ENCODE measurements at regions of chr11 and their contacts with region 1.

Region 1: GRCh38 chr11:65418711-65419459 is 3.7 kb upstream of the NEAT1 start:
- DNase-seq: peak; percentile 94
- ATAC-seq: peak; percentile 52
- H3K4me3 ChIP-seq: peak overlapping the region; percentile 43 to 86 (median 56)
- H3K4me3 Mint-ChIP-seq: peak overlapping the region; percentile 96
- H3K27ac ChIP-seq: peak overlapping the region; percentile 91 to 97
- H3K27ac Mint-ChIP-seq: peak overlapping the region; percentile 100
- H3K4me1 ChIP-seq: peaks cover 68 to 84% of the 10 kb centered on the region in 2 donors
- H3K4me1 Mint-ChIP-seq: peaks cover 72% of the 10 kb centered on the region
- H3K27me3 ChIP-seq: no peaks in the 10 kb centered on the region
- H3K27me3 Mint-ChIP-seq: no peaks in the 10 kb centered on the region
- CTCF ChIP-seq: no peak

Region 2: DNA sequence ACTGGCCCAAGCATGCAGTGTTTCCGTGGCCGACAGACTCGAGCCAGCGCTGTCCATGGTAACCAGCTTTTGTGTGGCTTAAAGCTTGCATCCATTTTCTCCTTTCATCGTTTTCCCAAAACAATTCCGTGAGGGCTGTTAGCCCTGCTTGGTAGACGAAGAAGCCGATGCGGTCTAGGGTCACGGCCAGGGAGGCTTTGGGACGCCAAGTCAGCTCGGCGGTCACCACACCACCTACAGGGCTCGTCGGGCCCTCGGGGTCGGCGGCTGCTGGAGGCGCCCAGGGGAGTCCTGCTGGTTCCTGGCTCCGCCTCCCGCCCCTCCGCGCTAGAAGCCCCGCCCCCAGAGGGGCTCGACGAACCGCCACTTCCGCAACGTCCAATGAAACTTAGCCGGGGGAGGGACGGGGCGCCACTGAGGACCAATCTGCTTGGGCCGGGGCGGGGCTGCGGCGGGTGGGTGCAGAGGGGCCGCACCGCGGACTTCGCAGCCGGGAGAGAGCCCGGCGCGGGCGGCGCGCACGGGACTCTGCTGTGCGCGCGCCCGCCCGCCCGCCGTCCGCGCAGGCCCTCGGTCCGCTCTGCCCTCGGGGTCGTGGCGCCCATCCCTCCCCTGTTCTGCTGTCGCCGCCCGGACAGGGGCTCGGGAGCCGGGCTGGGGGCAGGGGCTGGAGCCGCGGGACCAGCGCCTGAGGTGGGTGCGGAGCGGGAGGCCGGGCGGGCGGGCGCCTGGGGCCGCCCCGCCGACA is 64.4 kb before region 1 on chr11 and contains the start of gene TIGD3:
- CTCF ChIA-PET with region 1: no interaction called
- POLR2A ChIA-PET with region 1: interaction called, 4 read pairs
- intact Hi-C with region 1: loop called (anchors 2 kb)
- DNase-seq: peak; percentile 97
- ATAC-seq: peak; percentile 96
- H3K4me3 ChIP-seq: peak within 1 kb of the TSS; percentile 26 to 79 (median 65)
- H3K4me3 Mint-ChIP-seq: peak within 1 kb of the TSS; percentile 95
- H3K27ac ChIP-seq: peak within 1 kb of the TSS in 1 of 2 donors; percentile 18
- H3K27ac Mint-ChIP-seq: peak within 1 kb of the TSS; percentile 92
- H3K4me1 ChIP-seq: peaks cover 11 to 16% of the 10 kb centered on the region in 2 donors
- H3K4me1 Mint-ChIP-seq: peaks cover 20% of the 10 kb centered on the region
- H3K27me3 ChIP-seq: no peaks in the 10 kb centered on the region
- H3K27me3 Mint-ChIP-seq: no peaks in the 10 kb centered on the region
- CTCF ChIP-seq: no peak
- total RNA-seq, gene TIGD3: 6.1 and 7.5 TPM in 2 replicates

Region 3: DNA sequence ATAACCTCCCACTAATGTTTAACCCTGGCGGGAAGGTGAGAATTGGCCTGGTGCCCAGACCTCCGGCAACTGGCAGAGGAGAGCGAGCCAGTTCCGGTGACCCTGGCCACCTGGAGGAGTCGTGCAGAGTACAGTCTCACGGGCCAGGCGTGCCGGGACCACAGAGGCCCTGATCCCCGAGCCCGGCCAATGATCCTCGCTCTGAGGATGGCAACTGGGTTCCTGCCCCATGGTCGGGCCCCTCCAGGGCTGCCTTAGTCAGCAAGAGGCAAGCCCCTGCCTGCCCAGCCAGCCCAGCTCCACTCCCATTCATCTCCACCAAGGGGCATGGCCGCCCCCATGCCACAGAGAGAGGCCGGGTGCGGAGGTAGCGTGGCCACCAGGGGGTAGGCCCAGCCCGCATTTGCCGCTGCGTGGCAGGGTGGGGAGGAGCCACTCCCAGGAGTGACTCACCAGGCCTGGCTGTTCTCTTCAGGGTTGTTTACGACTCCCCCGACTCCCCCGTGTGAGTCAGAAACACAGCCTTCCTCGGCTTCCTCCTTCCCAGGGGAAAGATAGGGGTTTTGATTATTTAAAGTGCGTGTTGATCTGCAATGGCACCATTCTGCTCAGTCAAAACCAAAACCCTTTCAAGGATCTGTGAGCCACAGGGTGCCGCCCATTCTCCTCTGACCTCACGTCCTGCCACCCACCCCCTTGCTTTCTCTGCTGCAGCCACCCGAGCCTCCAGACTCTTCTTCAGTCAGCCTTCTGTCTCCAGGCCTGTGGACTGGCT is 36.7 kb before region 1 on chr11 and contains the start of gene SLC25A45:
- CTCF ChIA-PET with region 1: interaction called, 108 read pairs
- POLR2A ChIA-PET with region 1: interaction called, 107 read pairs
- intact Hi-C with region 1: loop called (anchors 1 kb)
- DNase-seq: peak; percentile 93
- ATAC-seq: peak; percentile 83
- H3K4me3 ChIP-seq: peak within 1 kb of the TSS; percentile 44 to 81 (median 61)
- H3K4me3 Mint-ChIP-seq: peak within 1 kb of the TSS; percentile 92
- H3K27ac ChIP-seq: peak within 1 kb of the TSS; percentile 91
- H3K27ac Mint-ChIP-seq: peak within 1 kb of the TSS; percentile 98
- H3K4me1 ChIP-seq: peaks cover 35 to 71% of the 10 kb centered on the region in 2 donors
- H3K4me1 Mint-ChIP-seq: peaks cover 63% of the 10 kb centered on the region
- H3K27me3 ChIP-seq: no peaks in the 10 kb centered on the region
- H3K27me3 Mint-ChIP-seq: no peaks in the 10 kb centered on the region
- CTCF ChIP-seq: peak; percentile 85
- total RNA-seq, gene SLC25A45: 16.4 and 18.2 TPM in 2 replicates

Region 4: DNA sequence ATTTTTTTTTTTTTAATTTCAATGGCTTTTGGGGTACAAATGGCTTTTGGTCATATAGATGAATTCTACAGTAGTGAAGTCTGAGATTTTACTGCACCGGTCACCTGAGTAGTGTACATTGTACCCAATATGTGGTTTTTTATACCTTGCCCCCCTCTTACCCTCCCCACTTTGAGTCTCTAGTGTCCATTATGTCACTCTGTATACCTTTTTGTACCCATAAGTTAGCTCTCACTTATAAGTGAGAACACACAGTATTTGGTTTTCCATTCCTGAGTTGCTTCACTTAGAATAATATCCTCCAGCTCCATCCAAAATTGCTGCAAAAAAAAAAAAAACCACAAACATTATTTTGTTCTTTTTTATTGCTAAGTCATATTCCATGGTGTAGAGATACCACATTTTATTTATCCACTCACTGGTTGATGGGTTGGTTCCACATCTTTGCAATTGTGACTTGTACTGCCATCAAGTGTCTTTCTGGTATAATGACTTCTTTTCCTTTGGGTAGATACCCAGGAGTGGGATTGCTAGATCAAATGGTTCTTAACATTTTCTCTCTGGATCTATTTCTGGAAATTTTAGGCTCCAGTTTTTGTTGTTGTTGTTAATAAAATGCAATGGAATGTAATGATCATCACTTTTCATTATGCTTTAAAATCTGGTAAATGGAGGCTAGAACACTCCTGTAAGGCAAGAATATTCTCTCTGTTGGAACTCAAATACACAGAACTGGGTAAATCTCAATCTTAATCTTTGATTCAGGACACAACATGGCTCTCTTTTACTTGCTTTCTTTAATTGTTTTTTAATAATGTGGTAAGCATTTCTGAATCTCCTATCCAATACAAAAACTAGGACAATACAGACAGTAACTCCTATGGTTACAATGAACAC is 14.0 kb after region 1 on chr11:
- CTCF ChIA-PET with region 1: interaction called, 54 read pairs
- POLR2A ChIA-PET with region 1: interaction called, 69 read pairs
- intact Hi-C with region 1: loop called (anchors 1 kb)
- DNase-seq: peak; percentile 75
- ATAC-seq: peak; percentile 20
- H3K4me3 ChIP-seq: no peak overlapping the region
- H3K4me3 Mint-ChIP-seq: peak overlapping the region; percentile 32
- H3K27ac ChIP-seq: no peak overlapping the region
- H3K27ac Mint-ChIP-seq: peak overlapping the region; percentile 47
- H3K4me1 ChIP-seq: peaks cover 48 to 53% of the 10 kb centered on the region in 2 donors
- H3K4me1 Mint-ChIP-seq: peaks cover 61% of the 10 kb centered on the region
- H3K27me3 ChIP-seq: no peaks in the 10 kb centered on the region
- H3K27me3 Mint-ChIP-seq: no peaks in the 10 kb centered on the region
- CTCF ChIP-seq: peak; percentile 62

Region 5: DNA sequence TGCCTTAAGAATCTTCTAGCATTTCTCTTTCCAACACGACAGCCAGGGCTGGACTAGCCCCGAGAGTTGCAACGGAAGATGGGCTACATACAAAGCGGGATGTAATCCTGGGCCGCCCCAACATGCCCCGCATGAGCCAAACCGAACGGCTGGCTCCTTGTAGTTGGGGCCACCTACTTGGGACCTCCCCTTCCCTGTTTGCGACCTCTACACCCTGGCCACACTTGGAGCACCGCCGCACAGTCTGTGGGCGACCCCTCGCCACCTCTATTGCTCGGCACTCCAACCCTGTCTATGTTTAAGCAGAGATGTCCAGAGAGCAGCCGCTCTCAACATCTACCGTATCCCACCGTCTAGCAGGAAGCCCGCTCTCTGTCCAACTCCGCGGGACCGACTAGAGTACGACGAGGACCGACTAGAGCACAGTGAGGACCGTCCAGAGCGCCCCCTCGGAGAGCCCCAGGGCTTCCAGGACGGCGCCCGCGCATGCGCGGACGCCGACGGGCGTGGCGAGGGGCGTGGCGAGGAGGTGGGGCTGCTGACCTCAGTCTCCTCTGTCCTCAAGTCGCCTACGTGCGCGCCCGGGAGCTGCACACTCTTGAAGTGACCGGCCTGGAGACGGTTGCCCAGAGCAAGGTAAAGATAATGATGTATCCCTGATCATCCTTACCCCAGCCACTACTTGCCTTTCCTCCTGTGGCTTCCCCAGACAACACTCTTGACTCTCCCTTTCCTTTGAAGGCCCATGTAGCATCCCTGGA is 36.0 kb after region 1 on chr11:
- CTCF ChIA-PET with region 1: no interaction called
- POLR2A ChIA-PET with region 1: interaction called, 12 read pairs
- intact Hi-C with region 1: no loop called
- DNase-seq: peak; percentile 91
- ATAC-seq: peak; percentile 97
- H3K4me3 ChIP-seq: peak overlapping the region; percentile 63 to 80 (median 67)
- H3K4me3 Mint-ChIP-seq: peak overlapping the region; percentile 96
- H3K27ac ChIP-seq: peak overlapping the region; percentile 70
- H3K27ac Mint-ChIP-seq: peak overlapping the region; percentile 92
- H3K4me1 ChIP-seq: peaks cover 4 to 18% of the 10 kb centered on the region in 2 donors
- H3K4me1 Mint-ChIP-seq: peaks cover 32% of the 10 kb centered on the region
- H3K27me3 ChIP-seq: no peaks in the 10 kb centered on the region
- H3K27me3 Mint-ChIP-seq: no peaks in the 10 kb centered on the region
- CTCF ChIP-seq: no peak

Region 6: GRCh38 chr11:65477149-65477965 is 58.5 kb after region 1 on chr11:
- CTCF ChIA-PET with region 1: interaction called, 24 read pairs
- POLR2A ChIA-PET with region 1: interaction called, 81 read pairs
- intact Hi-C with region 1: loop called (anchors 2 kb)
- DNase-seq: peak; percentile 90
- ATAC-seq: peak; percentile 87
- H3K4me3 ChIP-seq: peak overlapping the region; percentile 61 to 93 (median 83)
- H3K4me3 Mint-ChIP-seq: peak overlapping the region; percentile 96
- H3K27ac ChIP-seq: peak overlapping the region; percentile 88 to 92
- H3K27ac Mint-ChIP-seq: peak overlapping the region; percentile 99
- H3K4me1 ChIP-seq: peaks cover 11 to 32% of the 10 kb centered on the region in 2 donors
- H3K4me1 Mint-ChIP-seq: peaks cover 14% of the 10 kb centered on the region
- H3K27me3 ChIP-seq: no peaks in the 10 kb centered on the region
- H3K27me3 Mint-ChIP-seq: no peaks in the 10 kb centered on the region
- CTCF ChIP-seq: no peak

Region 7: GRCh38 chr11:65497141-65498041 is 78.5 kb after region 1 on chr11:
- CTCF ChIA-PET with region 1: interaction called, 541 read pairs
- POLR2A ChIA-PET with region 1: interaction called, 1,159 read pairs
- intact Hi-C with region 1: loop called (anchors 1 kb)
- DNase-seq: peak; percentile 99
- ATAC-seq: peak; percentile 76
- H3K4me3 ChIP-seq: peak overlapping the region; percentile 76 to 100 (median 93)
- H3K4me3 Mint-ChIP-seq: no peak overlapping the region
- H3K27ac ChIP-seq: peak overlapping the region; percentile 99 to 100
- H3K27ac Mint-ChIP-seq: no peak overlapping the region
- H3K4me1 ChIP-seq: peaks cover 31 to 53% of the 10 kb centered on the region in 2 donors
- H3K4me1 Mint-ChIP-seq: peaks cover 43% of the 10 kb centered on the region
- H3K27me3 ChIP-seq: no peaks in the 10 kb centered on the region
- H3K27me3 Mint-ChIP-seq: no peaks in the 10 kb centered on the region
- CTCF ChIP-seq: no peak